SK-N-SH (cell line): ENCODE measurements at regions of chr22 and their contacts with region 1.

Region 1: DNA sequence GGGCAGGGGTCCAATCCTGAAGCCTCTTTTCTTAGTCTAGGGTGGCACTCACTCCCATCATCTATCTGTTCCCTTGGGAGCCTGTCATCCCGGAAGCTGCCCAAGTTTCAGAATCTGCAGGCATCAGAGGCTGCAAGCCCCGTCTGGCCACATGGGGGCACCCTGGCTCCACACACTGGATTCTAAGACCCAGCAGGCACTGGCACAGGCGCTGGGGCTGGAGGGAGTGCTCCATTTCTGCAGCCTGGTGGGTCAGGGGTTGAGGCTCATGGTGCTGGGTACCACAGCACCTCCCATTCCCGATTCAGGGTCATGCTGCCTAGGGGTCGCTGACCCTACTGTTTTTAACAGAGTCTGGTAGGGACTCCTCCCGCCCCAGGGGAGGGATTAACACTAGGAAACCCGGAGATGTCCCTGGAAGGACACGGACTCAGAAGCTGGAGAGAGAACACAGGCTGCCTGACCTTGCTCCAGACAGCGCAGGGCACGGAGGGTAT is 243.9 kb upstream of the SYN3 start:
- DNase-seq: peak; percentile 81
- H3K4me3 ChIP-seq: peak overlapping the region in 1 of 2 experiments; percentile 41; a peak in 1 of 4 replicates
- H3K27ac ChIP-seq: no peak overlapping the region
- H3K4me1 ChIP-seq: no peaks in the 10 kb centered on the region
- H3K27me3 ChIP-seq: no peaks in the 10 kb centered on the region
- CTCF ChIP-seq: peak; percentile 71
- EP300 ChIP-seq: no peak
- RAD21 ChIP-seq: peak; percentile 95

Region 2: GRCh38 chr22:33083212-33083611 is 218.9 kb before region 1 on chr22:
- CTCF ChIA-PET with region 1: no interaction called
- POLR2A ChIA-PET with region 1: no interaction called
- DNase-seq: no peak
- H3K4me3 ChIP-seq: no peak overlapping the region
- H3K27ac ChIP-seq: no peak overlapping the region
- H3K4me1 ChIP-seq: peaks cover 0 to 2% of the 10 kb centered on the region in 2 experiments; a peak in 1 of 4 replicates
- H3K27me3 ChIP-seq: no peaks in the 10 kb centered on the region
- CTCF ChIP-seq: no peak
- EP300 ChIP-seq: no peak
- RAD21 ChIP-seq: no peak

Region 3: DNA sequence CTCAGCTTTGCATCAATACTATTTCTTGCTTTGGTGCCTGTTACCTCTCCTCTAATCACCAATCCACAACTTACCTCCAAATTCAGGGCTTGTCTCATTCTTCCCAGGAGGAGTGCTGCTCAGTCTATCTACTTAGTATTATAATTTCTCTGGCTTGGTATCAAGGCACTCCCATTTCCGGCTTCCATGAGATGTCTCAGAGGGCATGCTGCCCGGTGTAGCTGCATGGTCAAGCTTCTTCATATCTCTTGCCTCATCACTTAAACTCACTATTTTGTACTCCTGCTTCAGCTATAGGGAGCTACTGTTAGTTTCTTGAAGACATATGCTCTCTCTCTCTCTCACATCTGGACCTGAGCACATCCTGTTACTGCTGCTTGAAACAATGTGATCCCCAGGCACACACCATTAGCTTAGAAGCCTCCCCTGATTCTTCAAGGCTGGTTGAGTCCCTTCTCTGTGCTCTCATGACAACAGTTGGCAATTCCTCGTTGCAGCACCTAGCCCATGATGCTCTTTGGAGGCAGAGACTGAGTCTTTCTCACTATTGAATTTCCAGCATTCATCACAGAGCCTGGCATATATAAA is 61.1 kb before region 1 on chr22:
- CTCF ChIA-PET with region 1: no interaction called
- POLR2A ChIA-PET with region 1: no interaction called
- DNase-seq: no peak
- H3K4me3 ChIP-seq: no peak overlapping the region
- H3K27ac ChIP-seq: no peak overlapping the region
- H3K4me1 ChIP-seq: no peaks in the 10 kb centered on the region
- H3K27me3 ChIP-seq: no peaks in the 10 kb centered on the region
- CTCF ChIP-seq: no peak
- EP300 ChIP-seq: no peak
- RAD21 ChIP-seq: no peak

Region 4: GRCh38 chr22:33271390-33272161 is 30.5 kb before region 1 on chr22:
- CTCF ChIA-PET with region 1: interaction called, 12 read pairs
- POLR2A ChIA-PET with region 1: no interaction called
- DNase-seq: no peak
- H3K4me3 ChIP-seq: no peak overlapping the region
- H3K27ac ChIP-seq: no peak overlapping the region
- H3K4me1 ChIP-seq: no peaks in the 10 kb centered on the region; a peak in 1 of 4 replicates
- H3K27me3 ChIP-seq: no peaks in the 10 kb centered on the region
- CTCF ChIP-seq: no peak
- EP300 ChIP-seq: no peak
- RAD21 ChIP-seq: no peak

Region 5: GRCh38 chr22:33314316-33314715 is 12.2 kb after region 1 on chr22:
- CTCF ChIA-PET with region 1: interaction called, 47 read pairs
- POLR2A ChIA-PET with region 1: no interaction called
- DNase-seq: no peak
- H3K4me3 ChIP-seq: no peak overlapping the region
- H3K27ac ChIP-seq: no peak overlapping the region
- H3K4me1 ChIP-seq: no peaks in the 10 kb centered on the region
- H3K27me3 ChIP-seq: no peaks in the 10 kb centered on the region
- CTCF ChIP-seq: no peak
- EP300 ChIP-seq: no peak
- RAD21 ChIP-seq: no peak

Region 6: GRCh38 chr22:33467620-33468095 is 165.6 kb after region 1 on chr22:
- CTCF ChIA-PET with region 1: interaction called, 10 read pairs
- POLR2A ChIA-PET with region 1: no interaction called
- DNase-seq: peak; percentile 15
- H3K4me3 ChIP-seq: no peak overlapping the region
- H3K27ac ChIP-seq: no peak overlapping the region
- H3K4me1 ChIP-seq: no peaks in the 10 kb centered on the region
- H3K27me3 ChIP-seq: no peaks in the 10 kb centered on the region
- CTCF ChIP-seq: no peak
- EP300 ChIP-seq: no peak
- RAD21 ChIP-seq: peak; percentile 43

Region 7: DNA sequence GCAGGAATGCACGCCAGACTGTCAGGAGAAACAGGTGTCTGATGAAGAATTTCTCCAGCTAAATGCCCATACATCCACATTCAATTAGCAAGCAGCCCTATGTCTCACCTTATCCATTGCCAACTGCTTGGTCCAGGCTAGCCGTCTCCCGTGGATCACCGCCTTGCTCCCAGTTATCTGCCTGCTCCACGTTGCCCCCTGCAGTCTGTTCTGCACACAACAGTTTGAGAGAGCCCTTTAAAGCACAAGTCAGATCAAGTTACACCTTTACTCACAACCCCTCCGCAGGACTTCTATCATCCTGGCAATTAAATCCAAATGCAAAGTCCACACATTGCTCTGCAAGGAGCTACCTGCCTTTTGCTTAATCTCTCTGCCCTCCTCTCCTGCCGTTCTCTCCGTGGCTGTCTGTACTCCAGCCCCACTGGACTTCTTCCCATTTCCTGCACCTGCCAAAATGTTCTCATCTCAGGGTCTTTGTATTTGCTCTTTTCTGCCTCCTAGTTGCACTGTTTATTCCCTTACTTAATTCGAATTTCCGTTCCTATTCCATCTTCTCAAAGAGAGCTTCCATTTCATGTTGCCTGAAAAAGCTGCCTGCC is 803.5 kb after region 1 on chr22:
- CTCF ChIA-PET with region 1: interaction called, 24 read pairs
- POLR2A ChIA-PET with region 1: no interaction called
- DNase-seq: peak; percentile 40
- H3K4me3 ChIP-seq: no peak overlapping the region; a peak in 1 of 4 replicates
- H3K27ac ChIP-seq: no peak overlapping the region
- H3K4me1 ChIP-seq: no peaks in the 10 kb centered on the region
- H3K27me3 ChIP-seq: no peaks in the 10 kb centered on the region
- CTCF ChIP-seq: no peak
- EP300 ChIP-seq: no peak
- RAD21 ChIP-seq: peak; percentile 63